PC-9 (cell line): ENCODE measurements at regions of chr6 and their contacts with region 1.

Region 1: DNA sequence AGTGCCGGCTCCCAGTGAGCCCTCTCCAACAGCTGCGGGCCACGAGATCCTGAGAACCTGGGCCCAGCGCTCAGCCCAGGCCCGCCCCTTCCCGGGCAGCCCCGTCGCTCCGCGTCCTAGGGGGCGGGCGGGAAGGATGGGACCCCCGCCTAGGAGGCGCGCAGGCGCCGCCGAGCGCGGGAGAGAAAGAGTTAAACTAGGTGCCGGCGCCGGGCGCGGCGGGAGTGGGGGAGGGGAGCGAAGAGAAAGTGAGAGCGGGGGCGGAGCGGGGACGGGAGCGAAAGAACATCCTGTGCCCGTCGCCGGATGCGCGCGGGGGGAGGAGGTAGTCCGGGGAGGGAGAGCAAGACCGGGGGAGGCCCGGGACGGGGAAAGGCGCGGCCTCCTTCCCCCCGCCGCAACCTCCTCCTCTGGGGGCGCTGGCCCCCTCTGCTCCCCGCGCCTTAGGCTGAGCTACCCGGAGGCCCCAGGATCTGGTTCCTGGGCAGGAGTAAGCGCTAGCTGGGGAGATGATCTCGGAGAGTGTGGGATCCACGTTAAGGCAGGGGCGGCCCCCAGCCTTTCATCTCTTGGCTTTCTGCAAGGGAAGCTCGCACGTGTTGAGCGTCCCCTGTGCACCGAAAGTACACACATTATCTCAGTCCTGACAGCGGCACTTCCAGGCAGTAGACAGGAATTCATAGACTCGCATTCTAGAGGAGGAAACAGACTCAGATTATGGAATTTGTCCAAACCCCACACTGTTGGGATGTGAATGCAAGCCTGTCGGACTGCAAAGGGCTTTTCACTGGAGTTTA is 4.9 kb upstream of the ARMC12 start:
- DNase-seq: peak; percentile 50 to 81
- H3K4me3 ChIP-seq: peak overlapping the region; percentile 81
- H3K27ac ChIP-seq: no peak overlapping the region
- H3K4me1 ChIP-seq: peaks cover 21% of the 10 kb centered on the region
- H3K27me3 ChIP-seq: no peaks in the 10 kb centered on the region
- CTCF ChIP-seq: no peak

Region 2: DNA sequence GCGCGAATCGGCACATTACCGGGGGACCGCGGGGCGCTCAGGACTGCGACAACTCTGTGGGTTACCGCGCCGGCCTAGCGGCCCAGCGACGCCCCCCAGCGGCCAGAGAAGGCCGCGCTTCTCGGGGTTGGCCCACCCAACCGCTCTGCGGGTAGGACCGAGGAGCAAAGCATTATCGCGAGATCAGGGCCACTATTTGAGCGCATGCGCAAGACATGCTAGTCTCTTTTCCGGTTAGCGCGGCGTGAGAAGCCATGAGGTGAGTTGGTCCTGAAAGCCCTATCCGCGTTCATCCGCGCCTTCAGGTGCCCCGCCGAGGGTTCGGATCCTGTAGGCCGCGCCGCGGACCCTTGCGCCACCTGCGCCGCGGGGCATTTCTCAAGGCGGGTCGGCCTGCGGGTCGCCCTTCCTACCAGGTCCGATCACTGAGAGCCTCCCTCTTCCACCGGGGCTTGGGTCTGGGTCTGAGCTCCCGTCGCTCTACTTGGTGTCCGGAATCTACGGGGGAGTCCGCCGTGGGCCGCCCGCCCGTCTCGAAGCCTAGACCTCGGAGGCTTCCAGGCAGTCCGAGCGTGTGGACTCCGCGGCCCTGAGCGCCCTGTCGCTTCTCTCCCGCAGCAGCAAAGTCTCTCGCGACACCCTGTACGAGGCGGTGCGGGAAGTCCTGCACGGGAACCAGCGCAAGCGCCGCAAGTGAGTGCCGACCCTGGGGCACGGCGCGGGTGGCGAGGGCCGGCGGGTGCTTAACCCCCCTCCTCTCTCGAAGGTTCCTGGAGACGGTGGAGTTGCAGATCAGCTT is 263.6 kb before region 1 on chr6 and contains the start of gene RPL10A:
- CTCF ChIA-PET with region 1: no interaction called
- POLR2A ChIA-PET with region 1: interaction called, 5 read pairs
- intact Hi-C with region 1: loop called (anchors 10 kb)
- DNase-seq: peak; percentile 88 to 91
- H3K4me3 ChIP-seq: peak within 1 kb of the TSS; percentile 94
- H3K27ac ChIP-seq: peak within 1 kb of the TSS; percentile 96
- H3K4me1 ChIP-seq: peaks cover 28% of the 10 kb centered on the region
- H3K27me3 ChIP-seq: no peaks in the 10 kb centered on the region
- CTCF ChIP-seq: peak; percentile 93
- total RNA-seq, gene RPL10A: 1,335 and 1,742 TPM in 2 replicates

Region 3: DNA sequence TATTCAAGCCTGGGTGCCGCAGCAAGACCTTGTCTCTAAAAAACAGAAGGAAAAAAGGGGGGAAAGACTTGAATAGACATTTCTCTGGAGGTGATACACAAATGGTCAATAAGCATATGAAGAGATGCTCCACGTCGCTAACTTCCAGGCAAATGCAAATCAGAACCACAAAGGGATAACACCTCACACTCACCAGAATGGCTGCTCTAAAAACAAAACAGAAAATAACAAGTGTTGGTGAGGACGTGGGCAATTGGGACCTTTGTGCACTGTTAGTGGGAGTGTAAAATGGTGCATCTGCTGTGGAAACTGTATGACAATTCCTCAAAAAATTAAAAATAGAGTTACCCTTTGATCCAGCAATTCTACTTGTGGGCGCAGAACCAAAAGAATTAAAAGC is 170.8 kb before region 1 on chr6:
- CTCF ChIA-PET with region 1: interaction called, 10 read pairs
- POLR2A ChIA-PET with region 1: no interaction called
- intact Hi-C with region 1: no loop called
- DNase-seq: no peak
- H3K4me3 ChIP-seq: no peak overlapping the region
- H3K27ac ChIP-seq: no peak overlapping the region
- H3K4me1 ChIP-seq: no peaks in the 10 kb centered on the region
- H3K27me3 ChIP-seq: 0 out of 2 replicates have a peak, but pooled peaks cover 11% of the 10 kb centered on the region
- CTCF ChIP-seq: no peak

Region 4: GRCh38 chr6:35669451-35670045 is 62.4 kb before region 1 on chr6:
- CTCF ChIA-PET with region 1: no interaction called
- POLR2A ChIA-PET with region 1: no interaction called
- intact Hi-C with region 1: no loop called
- DNase-seq: no peak
- H3K4me3 ChIP-seq: no peak overlapping the region
- H3K27ac ChIP-seq: no peak overlapping the region
- H3K4me1 ChIP-seq: no peaks in the 10 kb centered on the region
- H3K27me3 ChIP-seq: no peaks in the 10 kb centered on the region
- CTCF ChIP-seq: no peak

Region 5: GRCh38 chr6:35688581-35689322 is 43.2 kb before region 1 on chr6 and contains the start of gene FKBP5:
- CTCF ChIA-PET with region 1: interaction called, 8 read pairs
- POLR2A ChIA-PET with region 1: no interaction called
- intact Hi-C with region 1: loop called (anchors 1 kb)
- DNase-seq: peak; percentile 73 to 94
- H3K4me3 ChIP-seq: peak within 1 kb of the TSS; percentile 69
- H3K27ac ChIP-seq: no peak within 1 kb of the TSS
- H3K4me1 ChIP-seq: peaks cover 16% of the 10 kb centered on the region; the same call in 1 of the 2 replicates
- H3K27me3 ChIP-seq: no peaks in the 10 kb centered on the region
- CTCF ChIP-seq: no peak
- total RNA-seq, gene FKBP5: 3.9 and 5.0 TPM in 2 replicates

Region 6: DNA sequence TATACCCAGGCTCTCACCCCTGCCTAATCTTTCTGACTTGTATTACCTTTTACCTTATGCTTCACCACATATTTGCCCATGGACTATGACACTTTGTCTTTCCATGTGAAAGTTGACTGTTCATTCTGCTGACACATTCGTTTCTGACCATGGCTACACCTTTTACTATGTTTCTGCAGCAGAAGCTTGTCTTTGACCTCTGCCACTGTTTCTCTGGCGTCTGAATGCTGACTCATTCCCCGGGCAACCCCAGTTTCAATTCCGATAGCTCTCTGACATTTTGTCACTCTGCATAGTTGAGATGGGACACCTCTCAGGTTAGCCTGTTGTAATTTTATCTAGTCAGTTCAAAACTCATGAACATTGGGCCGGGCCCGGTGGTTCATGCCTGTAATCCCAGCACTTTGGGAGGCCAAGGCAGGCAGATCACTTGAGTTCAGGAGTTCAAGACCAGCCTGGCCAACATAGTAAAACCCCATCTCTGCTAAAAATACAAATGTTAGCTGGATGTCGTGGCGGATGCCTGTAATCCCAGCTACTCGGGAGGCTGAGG is 241.8 kb after region 1 on chr6:
- CTCF ChIA-PET with region 1: no interaction called
- POLR2A ChIA-PET with region 1: no interaction called
- intact Hi-C with region 1: no loop called
- DNase-seq: peak; percentile 62 to 91
- H3K4me3 ChIP-seq: no peak overlapping the region
- H3K27ac ChIP-seq: peak overlapping the region; percentile 87
- H3K4me1 ChIP-seq: peaks cover 41% of the 10 kb centered on the region
- H3K27me3 ChIP-seq: no peaks in the 10 kb centered on the region
- CTCF ChIP-seq: no peak

Region 7: GRCh38 chr6:36094753-36095496 is 363.0 kb after region 1 on chr6:
- CTCF ChIA-PET with region 1: no interaction called
- POLR2A ChIA-PET with region 1: no interaction called
- intact Hi-C with region 1: loop called (anchors 2 kb)
- DNase-seq: peak; percentile 66
- H3K4me3 ChIP-seq: no peak overlapping the region
- H3K27ac ChIP-seq: peak overlapping the region; percentile 35
- H3K4me1 ChIP-seq: no peaks in the 10 kb centered on the region; the same call in 1 of the 2 replicates
- H3K27me3 ChIP-seq: no peaks in the 10 kb centered on the region
- CTCF ChIP-seq: peak; percentile 97

Region 8: DNA sequence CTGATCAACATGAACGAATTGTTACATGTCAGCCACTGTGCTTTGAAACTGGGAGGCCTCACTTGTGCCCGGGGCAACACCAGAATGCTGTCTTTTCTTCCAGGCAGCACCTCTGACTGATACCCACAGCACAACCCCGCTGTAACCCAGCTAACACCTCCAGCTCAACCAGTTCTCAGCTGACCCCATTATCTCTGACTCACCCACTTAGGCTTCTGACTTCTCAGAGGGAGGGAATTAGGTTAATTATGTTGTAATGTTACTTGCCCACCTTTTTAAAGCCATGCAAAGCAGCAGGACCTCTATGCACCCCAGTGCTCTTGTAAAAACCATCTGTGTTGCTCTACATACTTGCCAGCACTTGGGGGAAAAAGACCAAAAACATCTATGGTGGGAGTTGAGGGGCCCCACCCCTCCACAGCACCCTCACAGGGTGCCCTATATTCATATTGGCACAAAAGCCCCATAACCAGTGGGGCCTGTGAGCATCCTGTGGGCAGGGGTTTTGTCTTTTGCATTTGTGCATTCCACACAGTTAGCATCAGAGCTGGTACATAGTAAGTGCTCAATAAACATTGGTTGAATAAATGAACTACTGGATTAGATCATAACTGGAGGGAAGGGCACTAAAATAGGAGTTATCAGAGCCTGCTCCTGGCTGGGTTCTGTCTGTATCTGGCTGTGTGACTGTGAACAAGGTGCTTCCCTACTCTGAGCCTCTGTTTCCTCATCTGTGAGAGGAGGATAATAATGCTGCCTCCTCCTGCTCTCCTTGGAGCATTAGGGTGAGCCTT is 582.5 kb after region 1 on chr6:
- CTCF ChIA-PET with region 1: no interaction called
- POLR2A ChIA-PET with region 1: no interaction called
- intact Hi-C with region 1: no loop called
- DNase-seq: peak; percentile 80 to 96
- H3K4me3 ChIP-seq: peak overlapping the region; percentile 25; the same call in 1 of the 2 replicates
- H3K27ac ChIP-seq: peak overlapping the region; percentile 72
- H3K4me1 ChIP-seq: peaks cover 39% of the 10 kb centered on the region
- H3K27me3 ChIP-seq: no peaks in the 10 kb centered on the region
- CTCF ChIP-seq: no peak